ENCODE measurements at regions of chr3 and their contacts with region 1.

Region 1: DNA sequence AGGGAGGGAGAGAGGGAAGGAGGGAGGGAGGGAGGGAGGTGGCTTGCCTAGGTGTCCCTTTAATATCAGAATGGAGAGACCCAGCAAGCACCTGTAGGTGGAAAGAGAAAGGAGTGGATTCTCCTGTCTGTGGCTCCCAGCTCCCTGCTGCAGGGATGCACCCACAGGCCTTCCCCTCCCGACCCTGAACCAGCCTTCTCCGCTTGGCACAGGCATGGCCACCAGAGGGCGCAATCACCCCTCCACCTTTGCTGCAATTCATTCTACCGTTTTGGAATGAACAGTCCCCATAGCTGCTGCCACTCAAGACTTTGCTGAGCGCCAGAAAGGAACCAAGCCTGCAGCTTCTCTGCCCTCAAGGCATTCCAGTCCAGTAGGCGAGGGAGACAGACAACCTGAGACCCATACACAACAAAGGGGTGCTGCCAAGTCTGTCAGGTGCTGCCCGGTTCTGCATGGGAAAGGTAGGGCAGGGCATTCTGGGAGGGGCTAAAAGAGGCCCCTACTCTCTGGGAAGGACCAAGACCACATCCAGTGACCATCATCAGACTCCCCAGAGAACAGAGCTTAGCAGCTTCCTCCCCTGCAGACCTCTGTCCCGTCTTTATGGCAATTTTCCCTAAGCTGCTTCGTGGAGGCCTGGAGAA is 4.9 kb downstream of the TLR9 start:
- DNase-seq: peak; percentile 97
- H3K4me3 Mint-ChIP-seq: no peak overlapping the region
- H3K27ac Mint-ChIP-seq: no peak overlapping the region
- H3K4me1 Mint-ChIP-seq: peaks cover 82% of the 10 kb centered on the region
- H3K27me3 Mint-ChIP-seq: no peaks in the 10 kb centered on the region

Region 2: DNA sequence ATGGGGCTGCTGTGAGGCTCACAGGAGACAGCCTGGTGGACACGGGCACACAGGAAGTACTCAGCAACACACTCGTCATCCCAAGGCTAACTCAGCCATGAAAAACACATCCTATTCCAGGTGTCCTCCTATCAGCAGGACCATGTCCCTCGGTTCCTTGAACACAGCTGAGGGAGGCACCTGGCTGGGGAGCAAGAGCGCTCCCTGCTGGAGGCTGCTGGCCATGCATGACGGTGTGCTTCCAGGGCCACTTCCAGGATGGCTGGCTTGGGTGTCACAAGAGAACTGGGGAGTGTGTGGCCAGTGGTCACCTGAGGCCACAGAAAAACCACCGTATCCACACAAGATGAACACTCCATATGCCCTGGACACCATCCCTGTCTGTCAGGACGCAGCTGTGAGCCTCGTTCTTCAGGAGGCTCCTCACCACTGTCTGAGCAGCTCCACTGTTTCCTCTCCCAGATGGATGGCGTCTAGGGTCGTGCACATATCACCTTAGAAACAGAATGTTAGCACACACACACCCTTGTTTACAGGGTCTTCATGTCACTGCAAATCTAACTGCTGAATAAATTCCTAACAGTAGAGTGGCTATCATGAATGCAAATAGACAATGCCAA is 97.3 kb before region 1 on chr3:
- CTCF ChIA-PET with region 1: no interaction called
- intact Hi-C with region 1: no loop called
- DNase-seq: peak; percentile 73
- H3K4me3 Mint-ChIP-seq: no peak overlapping the region
- H3K27ac Mint-ChIP-seq: no peak overlapping the region
- H3K4me1 Mint-ChIP-seq: peaks cover 3% of the 10 kb centered on the region
- H3K27me3 Mint-ChIP-seq: no peaks in the 10 kb centered on the region

Region 3: GRCh38 chr3:52154117-52155094 is 66.1 kb before region 1 on chr3 and contains the start of gene POC1A:
- CTCF ChIA-PET with region 1: interaction called, 4 read pairs
- intact Hi-C with region 1: loop called (anchors 5 kb)
- DNase-seq: peak; percentile 96
- H3K4me3 Mint-ChIP-seq: peak within 1 kb of the TSS; percentile 91
- H3K27ac Mint-ChIP-seq: peak within 1 kb of the TSS; percentile 92
- H3K4me1 Mint-ChIP-seq: peaks cover 18% of the 10 kb centered on the region
- H3K27me3 Mint-ChIP-seq: no peaks in the 10 kb centered on the region
- total RNA-seq, gene POC1A: 32.3 to 32.7 TPM

Region 4: DNA sequence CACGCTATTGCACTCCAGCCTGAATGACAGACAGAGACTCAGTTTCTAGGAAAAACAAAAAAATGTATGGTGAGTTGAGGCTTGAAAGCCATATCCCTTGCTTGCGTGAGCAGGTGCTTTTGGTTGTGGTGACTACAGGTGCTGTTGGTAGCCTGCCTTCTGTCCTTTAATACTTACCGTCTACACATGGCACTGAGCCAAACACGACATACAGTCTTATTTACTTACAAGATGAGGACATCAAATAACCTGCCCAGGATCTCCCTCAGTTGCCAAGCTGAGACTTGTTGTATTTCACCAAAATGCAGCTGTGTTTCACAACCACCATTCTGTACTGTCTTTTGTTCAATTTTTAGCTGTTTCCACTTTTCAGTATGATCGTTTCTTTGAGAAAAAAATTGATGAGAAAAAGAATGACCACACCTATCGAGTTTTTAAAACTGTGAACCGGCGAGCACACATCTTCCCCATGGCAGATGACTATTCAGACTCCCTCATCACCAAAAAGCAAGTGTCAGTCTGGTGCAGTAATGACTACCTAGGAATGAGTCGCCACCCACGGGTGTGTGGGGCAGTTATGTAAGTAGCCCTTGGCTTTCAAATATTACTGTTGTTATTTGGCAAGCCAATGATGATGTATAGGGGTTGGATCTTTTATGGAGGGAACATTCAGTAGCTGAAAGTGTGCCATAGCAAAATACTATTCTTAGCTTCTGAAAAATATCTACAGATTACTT is 16.0 kb before region 1 on chr3:
- CTCF ChIA-PET with region 1: interaction called, 12 read pairs
- intact Hi-C with region 1: no loop called
- DNase-seq: no peak
- H3K4me3 Mint-ChIP-seq: no peak overlapping the region
- H3K27ac Mint-ChIP-seq: no peak overlapping the region
- H3K4me1 Mint-ChIP-seq: peaks cover 27% of the 10 kb centered on the region
- H3K27me3 Mint-ChIP-seq: no peaks in the 10 kb centered on the region

Region 5: GRCh38 chr3:52238761-52239701 is 18.5 kb after region 1 on chr3 and contains the start of gene TWF2:
- CTCF ChIA-PET with region 1: interaction called, 20 read pairs
- intact Hi-C with region 1: loop called (anchors 1 kb)
- DNase-seq: peak; percentile 83
- H3K4me3 Mint-ChIP-seq: peak within 1 kb of the TSS; percentile 92
- H3K27ac Mint-ChIP-seq: peak within 1 kb of the TSS; percentile 98
- H3K4me1 Mint-ChIP-seq: peaks cover 75% of the 10 kb centered on the region
- H3K27me3 Mint-ChIP-seq: no peaks in the 10 kb centered on the region
- total RNA-seq, gene TWF2: 89.1 to 91.3 TPM

Region 6: GRCh38 chr3:52385157-52385556 is 164.7 kb after region 1 on chr3:
- CTCF ChIA-PET with region 1: interaction called, 4 read pairs
- intact Hi-C with region 1: loop called (anchors 1 kb)
- DNase-seq: peak; percentile 60
- H3K4me3 Mint-ChIP-seq: no peak overlapping the region
- H3K27ac Mint-ChIP-seq: no peak overlapping the region
- H3K4me1 Mint-ChIP-seq: no peaks in the 10 kb centered on the region
- H3K27me3 Mint-ChIP-seq: no peaks in the 10 kb centered on the region

Region 7: DNA sequence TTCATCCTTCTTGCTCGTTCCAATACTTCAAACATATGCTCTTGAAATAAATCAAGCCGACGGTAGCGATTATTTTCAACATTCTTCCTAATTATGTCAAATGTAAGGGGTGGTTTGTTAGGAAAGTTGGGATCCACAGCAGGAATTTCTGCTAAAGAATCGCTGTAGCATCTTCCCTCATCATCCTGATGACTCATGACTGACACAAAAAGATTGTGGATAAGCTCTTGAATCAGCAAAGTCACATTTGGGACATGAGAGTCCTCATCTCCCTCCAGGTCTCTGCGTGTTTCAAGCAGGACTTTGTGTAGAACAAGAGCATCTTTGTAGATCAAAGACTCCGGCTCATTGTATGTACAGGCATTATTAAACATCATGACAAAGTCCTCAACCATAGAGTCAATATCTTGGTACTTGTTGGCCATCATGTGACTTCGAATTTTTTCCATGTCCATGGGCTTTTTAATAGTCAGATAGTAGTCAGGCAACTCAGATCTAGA is 388.9 kb after region 1 on chr3:
- CTCF ChIA-PET with region 1: no interaction called
- intact Hi-C with region 1: no loop called
- DNase-seq: no peak
- H3K4me3 Mint-ChIP-seq: no peak overlapping the region
- H3K27ac Mint-ChIP-seq: no peak overlapping the region
- H3K4me1 Mint-ChIP-seq: no peaks in the 10 kb centered on the region
- H3K27me3 Mint-ChIP-seq: no peaks in the 10 kb centered on the region